Calu3 (cell line): ENCODE measurements at regions of chr2 and their contacts with region 1.

Region 1: GRCh38 chr2:231297108-231297908 is 98.2 kb upstream of the B3GNT7 start:
- DNase-seq: peak; percentile 65
- H3K4me3 Mint-ChIP-seq: no peak overlapping the region
- H3K27ac Mint-ChIP-seq: no peak overlapping the region
- H3K4me1 Mint-ChIP-seq: peaks cover 13% of the 10 kb centered on the region
- H3K27me3 Mint-ChIP-seq: no peaks in the 10 kb centered on the region
- CTCF ChIP-seq: peak; percentile 86

Region 2: GRCh38 chr2:231227309-231228162 is 69.8 kb before region 1 on chr2:
- CTCF ChIA-PET with region 1: no interaction called
- intact Hi-C with region 1: loop called (anchors 5 kb)
- DNase-seq: peak; percentile 72
- H3K4me3 Mint-ChIP-seq: no peak overlapping the region
- H3K27ac Mint-ChIP-seq: no peak overlapping the region
- H3K4me1 Mint-ChIP-seq: peaks cover 23% of the 10 kb centered on the region
- H3K27me3 Mint-ChIP-seq: no peaks in the 10 kb centered on the region
- CTCF ChIP-seq: peak; percentile 77

Region 3: GRCh38 chr2:231399853-231400680 is 102.8 kb after region 1 on chr2:
- CTCF ChIA-PET with region 1: interaction called, 20 read pairs
- intact Hi-C with region 1: loop called (anchors 2 kb)
- DNase-seq: peak; percentile 41
- H3K4me3 Mint-ChIP-seq: no peak overlapping the region
- H3K27ac Mint-ChIP-seq: no peak overlapping the region
- H3K4me1 Mint-ChIP-seq: peaks cover 46% of the 10 kb centered on the region
- H3K27me3 Mint-ChIP-seq: peaks cover 14% of the 10 kb centered on the region
- CTCF ChIP-seq: no peak

Region 4: DNA sequence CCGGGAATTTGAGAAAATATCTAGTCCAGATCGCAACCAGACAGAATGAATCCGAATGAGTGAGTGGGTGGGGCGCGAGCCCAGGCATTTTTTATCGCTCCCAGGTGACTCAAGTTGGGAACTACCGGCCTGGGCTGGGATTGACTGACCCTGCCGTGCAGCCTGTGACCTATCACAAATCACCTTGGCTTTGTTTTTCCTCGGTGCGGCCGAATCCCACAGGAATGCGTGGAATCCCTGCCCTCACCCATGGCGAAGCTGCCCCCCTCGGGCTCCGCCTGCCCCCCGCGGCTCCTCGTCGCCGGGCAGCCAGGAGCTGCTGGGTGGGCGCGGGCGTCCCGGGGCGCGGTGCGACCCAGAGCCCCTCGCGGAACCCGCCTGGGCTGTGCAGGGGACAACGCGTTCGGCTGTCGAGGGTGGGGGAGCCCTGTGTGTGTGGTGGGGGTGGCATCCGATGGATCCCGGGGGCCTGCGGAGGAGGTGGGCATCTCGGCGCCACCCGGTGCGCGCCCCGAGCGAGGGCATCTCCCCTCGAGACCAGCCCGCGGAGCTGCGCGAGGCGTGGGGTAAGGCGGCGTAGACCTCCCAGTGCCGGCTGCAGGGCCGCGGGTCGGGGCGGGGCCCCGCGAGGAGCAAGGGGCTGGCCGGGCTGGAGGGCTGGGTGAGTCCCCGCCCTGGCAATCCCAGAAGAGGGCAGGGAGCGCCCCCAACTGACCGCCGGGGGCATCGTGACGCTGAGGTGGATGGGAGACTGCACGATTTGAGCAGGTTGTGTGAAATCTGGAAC is 114.7 kb after region 1 on chr2:
- CTCF ChIA-PET with region 1: interaction called, 6 read pairs
- intact Hi-C with region 1: loop called (anchors 2 kb)
- DNase-seq: peak; percentile 95
- H3K4me3 Mint-ChIP-seq: peak overlapping the region; percentile 66
- H3K27ac Mint-ChIP-seq: no peak overlapping the region
- H3K4me1 Mint-ChIP-seq: peaks cover 17% of the 10 kb centered on the region
- H3K27me3 Mint-ChIP-seq: no peaks in the 10 kb centered on the region
- CTCF ChIP-seq: peak; percentile 91

Region 5: DNA sequence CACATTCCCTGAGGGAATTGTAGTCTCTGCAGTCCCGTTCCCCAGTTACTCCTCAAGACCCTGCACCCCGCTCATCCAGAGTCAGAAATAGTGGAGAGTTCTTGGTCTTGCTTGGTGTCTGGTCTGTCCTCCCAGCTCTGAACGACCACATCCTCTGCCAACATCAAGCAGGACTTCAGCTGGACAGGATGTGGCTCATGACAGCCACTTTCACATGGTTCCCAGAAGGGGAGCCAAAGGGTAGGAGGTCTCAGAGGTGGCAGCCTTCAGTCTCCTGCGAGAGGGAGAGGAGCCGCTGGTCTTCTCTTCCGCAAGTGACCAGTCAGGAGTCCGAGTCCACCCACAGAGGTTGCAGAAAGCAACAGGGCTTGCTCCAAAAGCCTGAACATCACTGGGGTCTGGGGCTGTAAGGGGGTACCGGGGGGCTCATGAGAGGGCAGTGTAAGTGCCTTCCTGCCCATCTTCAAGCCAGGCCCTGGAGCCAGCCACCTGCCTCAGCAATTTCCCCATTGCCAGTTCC is 128.0 kb after region 1 on chr2:
- CTCF ChIA-PET with region 1: interaction called, 12 read pairs
- intact Hi-C with region 1: no loop called
- DNase-seq: no peak
- H3K4me3 Mint-ChIP-seq: no peak overlapping the region
- H3K27ac Mint-ChIP-seq: no peak overlapping the region
- H3K4me1 Mint-ChIP-seq: no peaks in the 10 kb centered on the region
- H3K27me3 Mint-ChIP-seq: peaks cover 6% of the 10 kb centered on the region
- CTCF ChIP-seq: no peak